A549 (cell line): ENCODE measurements at regions of chr17 and their contacts with region 1.

Region 1: GRCh38 chr17:42312285-42313130 is 24.2 kb downstream of the STAT5A start:
- DNase-seq: peak; percentile 77 to 86
- ATAC-seq: peak; percentile 74 to 89
- H3K4me3 ChIP-seq: no peak overlapping the region
- H3K27ac ChIP-seq: peak overlapping the region; percentile 36 to 76; a peak in 3 of 6 replicates
- H3K4me1 ChIP-seq: peaks cover 13% of the 10 kb centered on the region
- CTCF ChIP-seq: peak; percentile 77
- EP300 ChIP-seq: no peak
- POLR2A ChIP-seq: no peak
- RAD21 ChIP-seq: peak; percentile 84 to 91

Region 2: DNA sequence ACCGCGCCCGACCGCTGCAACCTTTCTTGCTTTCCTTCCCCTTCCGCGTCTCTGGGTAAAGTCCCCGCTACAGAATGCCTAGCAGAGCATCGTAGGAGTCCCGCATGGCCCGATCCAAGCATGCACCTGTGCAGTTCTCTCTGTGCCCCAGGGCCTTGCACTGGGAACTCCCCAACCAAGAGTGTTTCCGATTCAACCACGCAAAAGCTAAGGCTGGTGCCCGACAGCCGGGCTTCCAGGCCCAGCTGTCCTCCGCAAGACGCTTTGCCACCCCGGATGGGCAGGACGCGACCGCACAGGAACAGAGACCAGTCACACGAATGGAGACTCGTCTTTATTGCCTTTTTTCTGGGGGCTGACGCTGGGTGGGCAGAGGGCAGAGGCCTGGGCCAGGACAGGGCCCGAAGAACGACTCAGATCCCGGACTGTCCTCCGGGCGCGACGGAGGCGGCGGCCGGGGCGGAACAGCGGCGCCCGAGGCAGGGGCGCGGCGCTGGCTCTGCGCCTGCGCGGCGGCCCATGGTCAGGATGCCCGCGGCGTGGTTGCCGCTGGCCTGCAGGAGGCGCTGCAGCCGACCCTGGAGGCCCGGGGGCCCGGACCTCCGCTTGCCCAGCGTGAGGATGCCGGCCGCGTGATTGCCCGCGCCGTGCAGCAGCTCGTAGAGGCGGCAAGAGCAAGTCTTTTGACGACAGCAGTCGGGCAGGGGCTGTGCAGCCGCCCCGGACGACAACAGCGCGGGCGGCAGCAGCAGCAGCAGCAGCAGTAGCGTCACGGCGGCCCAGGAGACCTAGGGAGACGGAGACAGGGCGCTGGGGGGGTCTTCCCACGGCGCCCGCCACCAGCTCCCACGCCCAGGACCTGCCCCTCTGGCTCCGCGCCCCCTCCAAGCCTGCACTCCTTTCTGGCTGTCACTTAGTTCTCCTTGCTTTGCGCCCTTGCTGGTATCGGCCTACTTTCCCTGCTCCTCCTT is 128.5 kb before region 1 on chr17:
- CTCF ChIA-PET with region 1: interaction called, 10 read pairs
- POLR2A ChIA-PET with region 1: interaction called, 4 read pairs
- DNase-seq: peak; percentile 74 to 78
- ATAC-seq: peak; percentile 47 to 72
- H3K4me3 ChIP-seq: peak overlapping the region; percentile 48
- H3K27ac ChIP-seq: peak overlapping the region; percentile 74 to 87
- H3K4me1 ChIP-seq: peaks cover 38% of the 10 kb centered on the region
- CTCF ChIP-seq: peak; percentile 97
- EP300 ChIP-seq: no peak
- POLR2A ChIP-seq: peak; percentile 28; the same call in 1 of the 2 replicates
- RAD21 ChIP-seq: peak; percentile 37 to 58; a peak in 4 of 5 replicates

Region 3: GRCh38 chr17:42287926-42288802 is 24.3 kb before region 1 on chr17 and contains the start of gene STAT5A:
- CTCF ChIA-PET with region 1: interaction called, 65 read pairs
- POLR2A ChIA-PET with region 1: no interaction called
- DNase-seq: peak; percentile 73 to 83
- ATAC-seq: peak; percentile 81 to 86
- H3K4me3 ChIP-seq: peak within 1 kb of the TSS; percentile 62
- H3K27ac ChIP-seq: peak within 1 kb of the TSS; percentile 79 to 92
- H3K4me1 ChIP-seq: peaks cover 12% of the 10 kb centered on the region
- CTCF ChIP-seq: no peak
- EP300 ChIP-seq: no peak
- POLR2A ChIP-seq: no peak; the same call in 1 of the 2 replicates
- RAD21 ChIP-seq: 0 out of 5 replicates have a peak, but pooled peaks of 1 of the 2 experiments have one; percentile 13
- polyA plus RNA-seq, gene STAT5A: 2.2 and 3.1 TPM in 2 replicates

Region 4: GRCh38 chr17:42337442-42337841 is 24.9 kb after region 1 on chr17:
- CTCF ChIA-PET with region 1: interaction called, 21 read pairs
- POLR2A ChIA-PET with region 1: no interaction called
- DNase-seq: no peak
- ATAC-seq: no peak
- H3K4me3 ChIP-seq: no peak overlapping the region
- H3K27ac ChIP-seq: no peak overlapping the region
- H3K4me1 ChIP-seq: peaks cover 15% of the 10 kb centered on the region
- CTCF ChIP-seq: no peak
- EP300 ChIP-seq: no peak
- POLR2A ChIP-seq: no peak; the same call in 1 of the 2 replicates
- RAD21 ChIP-seq: no peak

Region 5: DNA sequence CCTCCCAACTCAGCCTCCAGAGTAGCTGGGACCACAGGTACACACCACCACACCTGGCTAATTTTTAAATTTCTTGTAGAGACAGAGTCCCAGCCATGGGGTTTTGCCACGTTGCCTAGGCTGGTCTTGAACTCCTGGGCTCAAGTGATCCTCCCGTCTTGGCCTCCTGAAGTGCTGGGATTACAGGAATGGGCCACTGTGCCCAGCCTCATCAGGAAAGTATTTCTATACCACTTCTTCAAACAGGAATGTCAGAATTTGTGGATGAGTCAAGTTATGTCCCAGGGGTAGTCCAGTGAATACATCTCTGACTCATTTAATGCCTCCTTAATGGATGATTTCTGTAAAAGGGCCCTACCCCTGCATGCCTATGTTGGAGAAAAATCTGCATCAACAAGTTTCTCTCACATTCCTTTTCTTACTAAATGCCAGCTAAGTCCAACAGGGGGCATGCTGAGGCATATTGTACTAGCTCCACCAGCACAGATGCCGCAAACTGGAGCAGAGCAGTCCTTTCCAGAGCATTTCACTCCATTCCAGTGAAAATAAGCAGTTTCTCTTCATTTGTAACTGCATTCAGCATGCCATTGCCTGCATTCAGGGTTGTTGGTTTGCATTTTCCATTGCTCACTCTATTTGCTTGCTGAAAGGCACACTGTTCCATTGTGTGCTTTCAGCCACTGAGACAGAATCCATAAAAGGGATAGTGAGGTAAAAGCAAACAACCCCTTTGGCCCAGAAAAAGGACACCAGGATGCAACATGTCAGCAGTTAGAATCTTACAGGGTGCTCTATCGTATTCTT is 115.8 kb after region 1 on chr17:
- CTCF ChIA-PET with region 1: interaction called, 15 read pairs
- POLR2A ChIA-PET with region 1: interaction called, 6 read pairs
- DNase-seq: peak; percentile 97 to 98
- ATAC-seq: peak; percentile 91 to 96
- H3K4me3 ChIP-seq: no peak overlapping the region
- H3K27ac ChIP-seq: peak overlapping the region; percentile 66 to 83
- H3K4me1 ChIP-seq: peaks cover 55% of the 10 kb centered on the region
- CTCF ChIP-seq: peak; percentile 84
- EP300 ChIP-seq: no peak
- POLR2A ChIP-seq: no peak
- RAD21 ChIP-seq: peak; percentile 84 to 86

Region 6: GRCh38 chr17:42536048-42536371 is 223.5 kb after region 1 on chr17 and contains the start of gene NAGLU:
- CTCF ChIA-PET with region 1: interaction called, 95 read pairs
- POLR2A ChIA-PET with region 1: no interaction called
- DNase-seq: peak; percentile 91 to 100
- ATAC-seq: peak; percentile 88 to 89
- H3K4me3 ChIP-seq: peak within 1 kb of the TSS; percentile 82
- H3K27ac ChIP-seq: peak within 1 kb of the TSS; percentile 93 to 97
- H3K4me1 ChIP-seq: peaks cover 31% of the 10 kb centered on the region
- CTCF ChIP-seq: no peak
- EP300 ChIP-seq: no peak
- POLR2A ChIP-seq: peak; percentile 54
- RAD21 ChIP-seq: no peak
- polyA plus RNA-seq, gene NAGLU: 17.8 and 18.0 TPM in 2 replicates